Activated CD4-positive, alpha-beta memory T cell treated with anti-CD3 and anti-CD28 coated beads, Interleukin-2, amount 10 ng/mL, durations not matched to agents 7 days and 5 days (primary cell): ENCODE measurements at regions of chr5 and their contacts with region 1.

Region 1: GRCh38 chr5:76771705-76772405 is 47.0 kb upstream of the F2RL1 start:
- DNase-seq: no peak
- H3K4me3 Mint-ChIP-seq: no peak overlapping the region
- H3K27ac Mint-ChIP-seq: no peak overlapping the region
- H3K4me1 Mint-ChIP-seq: peaks cover 2% of the 10 kb centered on the region
- H3K27me3 Mint-ChIP-seq: no peaks in the 10 kb centered on the region

Region 2: DNA sequence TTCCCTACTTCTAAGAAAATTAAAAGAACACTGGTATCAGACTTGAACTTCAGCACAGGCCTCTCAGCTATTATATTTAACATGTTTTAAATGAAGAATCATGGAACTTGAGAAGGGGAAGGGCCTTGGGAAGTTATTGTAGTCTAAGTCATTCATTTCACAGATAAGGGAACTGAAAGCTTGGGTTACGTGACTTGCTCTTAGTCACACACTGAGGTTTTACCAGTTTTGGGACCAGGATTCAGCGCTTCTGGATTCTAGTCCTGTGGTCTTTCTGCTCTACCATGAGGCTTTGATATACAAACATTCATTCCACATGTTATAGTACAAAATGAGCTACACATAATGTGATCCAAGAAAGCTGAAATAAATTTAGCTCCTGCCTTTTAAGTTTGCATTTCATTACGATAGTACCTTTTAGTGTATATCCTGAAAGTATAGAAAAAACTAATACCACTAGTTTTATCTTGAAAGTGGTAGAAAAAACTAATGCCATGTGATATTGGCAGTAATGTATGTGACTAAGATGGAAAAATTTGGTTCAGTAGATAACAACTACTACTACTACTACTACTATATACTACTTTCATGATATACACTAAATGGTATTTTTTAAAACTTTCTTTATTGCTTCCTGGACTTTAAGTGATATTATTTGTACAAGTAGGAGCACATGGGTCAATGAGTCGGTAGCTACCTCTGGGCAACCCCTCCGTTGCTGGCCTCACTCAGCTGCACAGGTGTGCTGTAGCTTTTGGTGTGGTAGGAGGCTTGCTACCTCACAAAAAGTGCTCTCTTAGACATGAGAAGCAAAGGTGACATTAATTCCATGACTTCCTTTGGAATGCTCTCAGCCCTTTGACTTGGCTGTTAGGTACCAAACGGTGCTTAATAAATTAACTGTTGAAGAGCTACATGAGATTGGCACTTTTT is 189.4 kb before region 1 on chr5:
- CTCF ChIA-PET with region 1: interaction called, 16 read pairs
- POLR2A ChIA-PET with region 1: no interaction called
- DNase-seq: no peak
- H3K4me3 Mint-ChIP-seq: no peak overlapping the region
- H3K27ac Mint-ChIP-seq: peak overlapping the region; percentile 26
- H3K4me1 Mint-ChIP-seq: peaks cover 29% of the 10 kb centered on the region
- H3K27me3 Mint-ChIP-seq: no peaks in the 10 kb centered on the region

Region 3: DNA sequence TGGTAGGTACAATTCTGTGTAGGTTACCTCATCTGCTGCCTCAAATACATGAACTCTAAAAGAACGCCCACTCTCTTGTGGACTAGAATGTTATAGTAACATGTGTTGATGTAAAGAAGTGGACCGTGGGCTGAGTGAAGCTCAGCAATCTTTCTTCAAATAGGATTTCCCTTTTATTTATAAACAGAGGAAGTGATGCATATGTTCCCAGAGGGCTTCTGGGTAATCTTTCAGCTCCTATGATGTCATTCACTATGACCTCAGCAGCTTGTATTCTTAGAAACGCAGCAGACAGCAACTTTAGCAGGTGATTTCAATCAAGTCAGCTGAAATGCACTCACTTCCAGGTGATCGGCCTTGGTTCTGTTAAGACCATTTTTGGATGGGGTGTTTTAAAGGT is 163.0 kb before region 1 on chr5:
- CTCF ChIA-PET with region 1: interaction called, 35 read pairs
- POLR2A ChIA-PET with region 1: no interaction called
- DNase-seq: no peak
- H3K4me3 Mint-ChIP-seq: no peak overlapping the region
- H3K27ac Mint-ChIP-seq: no peak overlapping the region
- H3K4me1 Mint-ChIP-seq: peaks cover 14% of the 10 kb centered on the region
- H3K27me3 Mint-ChIP-seq: no peaks in the 10 kb centered on the region

Region 4: DNA sequence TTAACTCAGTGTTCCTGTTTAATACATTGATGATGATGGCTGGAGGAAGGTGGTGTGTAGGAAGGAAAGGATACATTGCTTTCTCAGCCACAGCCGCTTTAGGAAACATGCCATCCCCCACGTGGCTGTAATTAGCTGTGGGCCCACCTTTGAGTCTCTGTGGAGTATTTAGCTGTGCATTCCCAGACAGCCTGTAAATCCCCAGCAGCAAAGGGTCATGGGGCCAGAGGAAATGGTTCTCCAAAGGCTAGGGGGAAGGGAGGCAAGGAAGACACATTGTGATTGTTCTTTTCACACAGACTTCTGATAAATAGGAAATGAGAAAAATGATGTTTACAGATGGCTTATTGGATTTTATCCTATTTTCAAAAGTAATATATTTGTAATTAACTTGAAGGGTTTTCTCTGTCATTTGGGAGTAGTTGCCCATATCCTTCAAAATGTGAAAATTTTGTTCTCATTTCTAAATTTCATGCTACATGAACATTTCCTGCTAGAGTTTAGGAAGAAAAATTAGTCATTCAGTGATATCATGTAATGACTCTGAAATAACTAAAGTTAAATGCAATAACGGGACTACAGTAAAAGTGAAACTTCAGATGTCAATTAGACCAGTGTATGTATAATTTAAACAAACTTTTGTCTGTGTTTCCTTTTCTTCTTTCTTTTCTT is 80.3 kb before region 1 on chr5:
- CTCF ChIA-PET with region 1: interaction called, 12 read pairs
- POLR2A ChIA-PET with region 1: interaction called, 3 read pairs
- DNase-seq: no peak
- H3K4me3 Mint-ChIP-seq: no peak overlapping the region
- H3K27ac Mint-ChIP-seq: peak overlapping the region; percentile 60
- H3K4me1 Mint-ChIP-seq: peaks cover 28% of the 10 kb centered on the region
- H3K27me3 Mint-ChIP-seq: no peaks in the 10 kb centered on the region

Region 5: DNA sequence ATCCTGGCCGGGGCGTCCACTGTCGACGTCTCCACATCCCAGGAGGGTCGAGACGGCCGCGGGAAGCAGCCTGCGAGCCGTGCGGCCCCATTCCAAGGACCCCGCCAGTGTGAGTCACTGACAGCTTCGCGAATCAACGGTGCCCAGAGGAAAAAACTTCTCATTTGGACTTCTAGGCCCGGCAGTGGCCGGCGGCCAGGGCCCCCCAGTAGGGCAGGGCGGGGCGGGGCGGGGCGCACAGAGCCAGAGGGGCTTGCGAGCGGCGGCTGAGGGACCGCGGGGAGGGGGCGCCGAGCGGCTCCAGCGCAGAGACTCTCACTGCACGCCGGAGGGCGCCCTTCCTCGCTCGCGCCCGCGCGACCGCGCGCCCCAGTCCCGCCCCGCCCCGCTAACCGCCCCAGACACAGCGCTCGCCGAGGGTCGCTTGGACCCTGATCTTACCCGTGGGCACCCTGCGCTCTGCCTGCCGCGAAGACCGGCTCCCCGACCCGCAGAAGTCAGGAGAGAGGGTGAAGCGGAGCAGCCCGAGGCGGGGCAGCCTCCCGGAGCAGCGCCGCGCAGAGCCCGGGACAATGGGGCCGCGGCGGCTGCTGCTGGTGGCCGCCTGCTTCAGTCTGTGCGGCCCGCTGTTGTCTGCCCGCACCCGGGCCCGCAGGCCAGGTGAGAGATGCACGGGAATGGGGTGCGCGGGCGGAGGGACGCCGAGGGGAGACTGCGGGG is 56.0 kb before region 1 on chr5 and contains the start of gene F2R:
- CTCF ChIA-PET with region 1: interaction called, 31 read pairs
- POLR2A ChIA-PET with region 1: interaction called, 15 read pairs
- DNase-seq: peak; percentile 72
- H3K4me3 Mint-ChIP-seq: peak within 1 kb of the TSS; percentile 83
- H3K27ac Mint-ChIP-seq: peak within 1 kb of the TSS; percentile 76
- H3K4me1 Mint-ChIP-seq: peaks cover 61% of the 10 kb centered on the region
- H3K27me3 Mint-ChIP-seq: no peaks in the 10 kb centered on the region
- total RNA-seq, gene F2R: 35.0 to 36.6 TPM

Region 6: DNA sequence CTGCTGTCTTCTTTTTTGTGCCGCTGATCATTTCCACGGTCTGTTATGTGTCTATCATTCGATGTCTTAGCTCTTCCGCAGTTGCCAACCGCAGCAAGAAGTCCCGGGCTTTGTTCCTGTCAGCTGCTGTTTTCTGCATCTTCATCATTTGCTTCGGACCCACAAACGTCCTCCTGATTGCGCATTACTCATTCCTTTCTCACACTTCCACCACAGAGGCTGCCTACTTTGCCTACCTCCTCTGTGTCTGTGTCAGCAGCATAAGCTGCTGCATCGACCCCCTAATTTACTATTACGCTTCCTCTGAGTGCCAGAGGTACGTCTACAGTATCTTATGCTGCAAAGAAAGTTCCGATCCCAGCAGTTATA is 38.8 kb before region 1 on chr5:
- CTCF ChIA-PET with region 1: interaction called, 60 read pairs
- POLR2A ChIA-PET with region 1: interaction called, 10 read pairs
- DNase-seq: peak; percentile 86
- H3K4me3 Mint-ChIP-seq: peak overlapping the region; percentile 70
- H3K27ac Mint-ChIP-seq: peak overlapping the region; percentile 98
- H3K4me1 Mint-ChIP-seq: peaks cover 62% of the 10 kb centered on the region
- H3K27me3 Mint-ChIP-seq: no peaks in the 10 kb centered on the region

Region 7: GRCh38 chr5:76893294-76893693 is 121.4 kb after region 1 on chr5:
- CTCF ChIA-PET with region 1: no interaction called
- POLR2A ChIA-PET with region 1: no interaction called
- DNase-seq: no peak
- H3K4me3 Mint-ChIP-seq: no peak overlapping the region
- H3K27ac Mint-ChIP-seq: no peak overlapping the region
- H3K4me1 Mint-ChIP-seq: no peaks in the 10 kb centered on the region
- H3K27me3 Mint-ChIP-seq: peaks cover 18% of the 10 kb centered on the region